GM12878 (cell line): ENCODE measurements at regions of chr5 and their contacts with region 1.

Region 1: DNA sequence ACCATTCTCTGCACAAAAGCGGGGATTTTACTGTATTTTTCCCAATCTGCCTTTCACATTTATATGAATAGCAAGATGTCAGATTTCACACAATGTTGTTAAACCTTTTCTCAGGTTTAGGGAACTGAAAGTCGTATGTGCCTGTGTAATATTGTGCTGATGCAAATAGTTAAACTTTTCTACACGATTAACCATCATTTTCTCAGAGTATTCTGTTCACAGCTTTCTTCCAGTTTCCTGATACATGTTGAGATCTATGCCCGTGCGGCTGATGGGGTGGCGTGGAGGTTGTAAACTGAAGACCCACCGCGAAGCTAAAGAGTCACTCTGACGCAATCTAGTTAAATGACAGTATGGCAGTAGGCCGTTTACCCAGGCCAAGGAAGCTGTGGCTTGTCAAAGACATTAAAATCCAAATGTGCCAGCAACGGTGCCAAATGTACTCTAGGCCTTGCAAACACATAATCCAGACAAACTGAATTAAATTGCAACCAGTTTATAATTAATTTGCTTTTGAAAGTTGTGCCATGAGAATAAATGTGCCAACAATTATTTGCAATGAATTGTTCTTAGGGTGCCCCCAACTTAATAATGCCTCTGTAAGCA is 145.7 kb downstream of the EBF1 start:
- DNase-seq: peak; percentile 98
- ATAC-seq: peak; percentile 79
- H3K4me3 ChIP-seq: 0 out of 2 replicates have a peak overlapping the region, but pooled peaks have one; percentile 6
- H3K27ac ChIP-seq: peak overlapping the region; percentile 93
- H3K4me1 ChIP-seq: peaks cover 70% of the 10 kb centered on the region
- H3K27me3 ChIP-seq: no peaks in the 10 kb centered on the region
- CTCF ChIP-seq: no peak
- EP300 ChIP-seq: peak; percentile 94 to 98; a peak in 3 of 4 replicates
- POLR2A ChIP-seq: peak; percentile 47; the same call in 1 of the 2 replicates
- RAD21 ChIP-seq: 0 out of 2 replicates have a peak, but pooled peaks have one; percentile 23

Region 2: GRCh38 chr5:158695595-158696330 is 258.3 kb before region 1 on chr5:
- CTCF ChIA-PET with region 1: interaction called, 8 read pairs
- POLR2A ChIA-PET with region 1: no interaction called
- RAD21 ChIA-PET with region 1: interaction called, 13 read pairs
- SMC1A ChIA-PET with region 1: interaction called, 8 read pairs
- in situ Hi-C with region 1: no loop called
- intact Hi-C with region 1: loop called (anchors 1 kb)
- DNase-seq: peak; percentile 85
- ATAC-seq: peak; percentile 94
- H3K4me3 ChIP-seq: no peak overlapping the region
- H3K27ac ChIP-seq: no peak overlapping the region
- H3K4me1 ChIP-seq: no peaks in the 10 kb centered on the region
- H3K27me3 ChIP-seq: no peaks in the 10 kb centered on the region
- CTCF ChIP-seq: peak; percentile 88 to 97 (median 88)
- EP300 ChIP-seq: peak; percentile 41 to 66; a peak in 2 of 4 replicates
- POLR2A ChIP-seq: no peak
- RAD21 ChIP-seq: peak; percentile 88

Region 3: DNA sequence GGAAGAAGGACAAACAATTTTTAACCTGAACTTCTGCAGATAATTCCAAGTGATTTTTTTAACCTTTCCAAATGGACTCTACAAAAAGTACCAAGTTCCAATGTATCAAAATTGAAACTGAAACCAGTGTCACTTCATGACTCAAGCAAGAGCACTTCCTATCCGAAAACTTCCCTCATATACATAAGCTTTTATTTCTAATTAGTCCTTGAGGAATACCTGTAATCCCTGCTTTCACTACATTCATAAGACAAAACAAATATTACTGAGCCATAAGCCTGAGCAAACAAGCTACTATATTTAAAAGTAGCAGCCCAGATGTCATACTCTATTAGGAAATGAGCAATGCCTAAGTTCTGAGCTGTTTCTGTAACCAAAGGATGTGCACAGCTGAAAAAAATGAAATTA is 78.8 kb before region 1 on chr5:
- CTCF ChIA-PET with region 1: interaction called, 17 read pairs
- POLR2A ChIA-PET with region 1: interaction called, 12 read pairs
- RAD21 ChIA-PET with region 1: interaction called, 97 read pairs
- SMC1A ChIA-PET with region 1: interaction called, 48 read pairs
- in situ Hi-C with region 1: no loop called
- intact Hi-C with region 1: loop called (anchors 1 kb)
- DNase-seq: no peak
- ATAC-seq: peak; percentile 54
- H3K4me3 ChIP-seq: no peak overlapping the region
- H3K27ac ChIP-seq: peak overlapping the region; percentile 71
- H3K4me1 ChIP-seq: peaks cover 55% of the 10 kb centered on the region
- H3K27me3 ChIP-seq: no peaks in the 10 kb centered on the region
- CTCF ChIP-seq: no peak
- EP300 ChIP-seq: peak; percentile 60 to 64; a peak in 2 of 4 replicates
- POLR2A ChIP-seq: no peak
- RAD21 ChIP-seq: no peak

Region 4: DNA sequence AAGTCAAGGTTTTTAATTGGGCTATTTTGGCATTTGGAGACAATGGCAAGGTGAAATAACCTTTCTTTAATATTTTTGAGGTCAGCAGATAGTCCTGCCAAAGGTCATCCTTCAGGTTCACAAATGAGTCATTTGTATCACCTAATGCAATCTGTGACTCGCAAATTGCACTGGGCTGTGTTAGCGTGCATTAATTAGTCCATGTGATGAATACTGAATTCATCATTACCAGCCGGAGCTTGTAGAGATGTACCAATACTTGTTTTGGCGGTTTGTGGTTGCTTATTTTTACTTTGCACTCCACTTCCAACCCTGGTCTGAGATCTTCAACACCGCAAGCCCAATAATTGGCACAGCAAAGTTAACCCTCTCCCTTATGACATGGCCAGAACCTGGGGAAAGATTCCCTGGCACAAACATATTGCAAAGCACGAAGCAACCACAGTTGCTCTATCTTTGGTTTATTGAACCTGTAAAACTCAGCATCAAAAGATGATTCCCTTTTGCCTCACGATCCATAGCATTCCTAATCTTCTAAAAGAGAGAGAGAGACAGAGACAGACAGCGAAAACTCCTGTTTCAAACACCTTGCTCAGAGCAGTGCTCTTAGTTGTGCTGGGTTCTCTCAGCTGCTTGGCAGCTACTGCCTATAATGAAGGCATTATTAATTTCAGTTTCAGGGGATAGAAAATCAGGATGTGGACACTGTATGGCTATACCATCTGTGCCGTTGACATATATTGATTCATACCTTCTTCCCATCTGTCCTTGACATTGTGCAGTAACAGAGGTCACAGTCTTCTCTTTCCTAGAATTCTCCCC is 32.4 kb before region 1 on chr5:
- CTCF ChIA-PET with region 1: interaction called, 31 read pairs
- POLR2A ChIA-PET with region 1: interaction called, 110 read pairs
- RAD21 ChIA-PET with region 1: interaction called, 167 read pairs
- SMC1A ChIA-PET with region 1: interaction called, 399 read pairs
- in situ Hi-C with region 1: no loop called
- intact Hi-C with region 1: loop called (anchors 1 kb)
- DNase-seq: peak; percentile 75
- ATAC-seq: peak; percentile 70
- H3K4me3 ChIP-seq: no peak overlapping the region
- H3K27ac ChIP-seq: peak overlapping the region; percentile 45
- H3K4me1 ChIP-seq: peaks cover 3% of the 10 kb centered on the region
- H3K27me3 ChIP-seq: no peaks in the 10 kb centered on the region
- CTCF ChIP-seq: no peak
- EP300 ChIP-seq: peak; percentile 91 to 98
- POLR2A ChIP-seq: no peak
- RAD21 ChIP-seq: no peak

Region 5: GRCh38 chr5:159003037-159004030 is 49.3 kb after region 1 on chr5:
- CTCF ChIA-PET with region 1: interaction called, 3 read pairs
- POLR2A ChIA-PET with region 1: interaction called, 6 read pairs
- RAD21 ChIA-PET with region 1: interaction called, 18 read pairs
- SMC1A ChIA-PET with region 1: interaction called, 81 read pairs
- in situ Hi-C with region 1: no loop called
- intact Hi-C with region 1: no loop called
- DNase-seq: no peak
- ATAC-seq: no peak
- H3K4me3 ChIP-seq: no peak overlapping the region
- H3K27ac ChIP-seq: no peak overlapping the region
- H3K4me1 ChIP-seq: peaks cover 5% of the 10 kb centered on the region; the same call in 1 of the 2 replicates
- H3K27me3 ChIP-seq: no peaks in the 10 kb centered on the region
- CTCF ChIP-seq: no peak
- EP300 ChIP-seq: no peak
- POLR2A ChIP-seq: no peak
- RAD21 ChIP-seq: no peak

Region 6: DNA sequence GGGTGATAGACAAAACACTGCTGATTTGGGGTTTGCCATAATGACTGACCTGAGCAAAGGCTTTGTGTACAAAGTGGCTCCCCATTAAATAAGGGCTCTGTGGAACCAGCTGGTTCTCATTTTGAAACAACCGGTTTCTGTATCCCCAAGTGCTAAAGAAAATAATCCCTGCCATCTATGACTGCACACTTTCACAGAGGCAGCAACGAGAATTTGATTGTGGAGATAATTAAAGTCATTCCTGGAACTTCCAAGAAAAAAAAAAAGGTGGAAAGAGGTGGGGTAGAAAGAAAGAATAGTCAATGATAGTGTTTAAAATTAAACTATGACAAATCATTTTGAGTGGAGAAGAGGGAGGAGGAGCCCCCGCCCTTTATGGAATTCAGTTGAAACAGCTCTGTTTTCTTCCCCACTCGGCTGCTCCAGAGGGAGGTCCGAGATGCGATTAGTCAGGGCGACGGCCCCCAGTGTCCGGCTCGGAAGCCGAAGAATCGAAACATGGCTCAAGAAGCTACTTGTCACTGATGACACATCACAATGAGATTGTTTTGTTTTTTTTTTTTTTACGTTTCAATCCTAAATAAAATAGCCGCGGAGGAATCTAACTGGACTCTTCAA is 107.3 kb after region 1 on chr5:
- CTCF ChIA-PET with region 1: interaction called, 4 read pairs
- POLR2A ChIA-PET with region 1: interaction called, 5 read pairs
- RAD21 ChIA-PET with region 1: interaction called, 3 read pairs
- SMC1A ChIA-PET with region 1: interaction called, 13 read pairs
- in situ Hi-C with region 1: no loop called
- intact Hi-C with region 1: no loop called
- DNase-seq: no peak
- ATAC-seq: peak; percentile 39
- H3K4me3 ChIP-seq: no peak overlapping the region
- H3K27ac ChIP-seq: no peak overlapping the region
- H3K4me1 ChIP-seq: peaks cover 12% of the 10 kb centered on the region; the same call in 1 of the 2 replicates
- H3K27me3 ChIP-seq: no peaks in the 10 kb centered on the region
- CTCF ChIP-seq: no peak
- EP300 ChIP-seq: no peak
- POLR2A ChIP-seq: no peak
- RAD21 ChIP-seq: no peak